ENCODE measurements at regions of chr1 and their contacts with region 1.

Region 1: GRCh38 chr1:171741872-171742576 is at the start of gene VAMP4:
- DNase-seq: peak; percentile 92
- ATAC-seq: peak; percentile 90
- H3K4me3 ChIP-seq: peak within 1 kb of the TSS; percentile 69 to 95 (median 93)
- H3K4me3 Mint-ChIP-seq: peak within 1 kb of the TSS; percentile 100
- H3K27ac ChIP-seq: peak within 1 kb of the TSS; percentile 91
- H3K27ac Mint-ChIP-seq: peak within 1 kb of the TSS; percentile 100
- H3K4me1 ChIP-seq: peaks cover 20 to 23% of the 10 kb centered on the region in 2 donors
- H3K4me1 Mint-ChIP-seq: peaks cover 40% of the 10 kb centered on the region
- H3K27me3 ChIP-seq: no peaks in the 10 kb centered on the region
- H3K27me3 Mint-ChIP-seq: no peaks in the 10 kb centered on the region
- CTCF ChIP-seq: no peak
- total RNA-seq, gene VAMP4: 17.5 and 21.8 TPM in 2 replicates

Region 2: GRCh38 chr1:171769171-171769570 is 27.1 kb after region 1 on chr1:
- CTCF ChIA-PET with region 1: no interaction called
- POLR2A ChIA-PET with region 1: no interaction called
- intact Hi-C with region 1: no loop called
- DNase-seq: no peak
- ATAC-seq: no peak
- H3K4me3 ChIP-seq: no peak overlapping the region
- H3K4me3 Mint-ChIP-seq: no peak overlapping the region
- H3K27ac ChIP-seq: no peak overlapping the region
- H3K27ac Mint-ChIP-seq: no peak overlapping the region
- H3K4me1 ChIP-seq: peaks cover 0 to 4% of the 10 kb centered on the region in 2 donors
- H3K4me1 Mint-ChIP-seq: peaks cover 8% of the 10 kb centered on the region
- H3K27me3 ChIP-seq: peaks cover 0 to 2% (median 0%) of the 10 kb centered on the region in 4 experiments
- H3K27me3 Mint-ChIP-seq: peaks cover 7% of the 10 kb centered on the region
- CTCF ChIP-seq: no peak

Region 3: DNA sequence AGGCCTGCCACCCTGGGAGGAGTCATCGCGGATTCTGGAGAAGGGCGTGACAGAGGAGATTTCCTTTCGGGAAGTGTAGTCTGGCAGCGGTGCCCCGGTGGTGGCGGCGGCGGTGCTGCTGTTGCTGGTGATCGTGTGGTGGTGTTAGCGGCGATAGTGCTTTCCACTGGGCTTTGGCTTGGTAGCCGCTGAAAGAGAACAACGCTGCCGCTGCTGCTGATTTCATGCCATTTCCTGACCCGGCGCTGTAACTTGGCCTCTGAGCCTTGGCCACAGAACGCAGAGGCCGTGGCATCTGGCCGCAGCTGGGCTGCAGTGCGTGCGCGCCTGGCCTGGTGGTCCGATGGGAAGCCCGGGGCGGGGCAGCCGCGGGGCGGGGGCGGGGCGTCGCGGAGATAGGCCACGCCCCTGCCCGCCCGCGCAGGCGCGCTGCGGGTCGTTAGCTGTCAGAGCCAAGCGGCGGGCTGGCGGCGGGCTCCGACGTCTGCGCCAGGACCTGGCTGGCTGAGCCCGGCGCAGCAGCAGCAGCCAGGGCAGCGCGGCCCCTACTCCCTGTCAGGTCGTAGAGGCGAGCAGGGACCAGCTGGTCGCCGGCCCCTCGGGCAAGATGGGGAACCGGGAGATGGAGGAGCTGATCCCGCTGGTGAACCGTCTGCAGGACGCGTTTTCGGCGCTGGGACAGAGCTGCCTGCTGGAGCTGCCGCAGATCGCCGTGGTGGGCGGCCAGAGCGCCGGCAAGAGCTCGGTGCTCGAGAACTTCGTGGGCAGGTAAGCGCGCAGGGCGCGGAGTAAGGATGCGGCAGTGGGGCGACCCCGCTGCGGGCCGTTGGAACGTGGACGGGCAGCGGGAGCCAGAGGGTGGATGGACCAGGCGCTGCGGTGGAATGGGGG is 99.3 kb after region 1 on chr1 and contains the start of gene DNM3:
- CTCF ChIA-PET with region 1: interaction called, 3 read pairs
- POLR2A ChIA-PET with region 1: no interaction called
- intact Hi-C with region 1: loop called (anchors 1 kb)
- DNase-seq: peak; percentile 88
- ATAC-seq: peak; percentile 93
- H3K4me3 ChIP-seq: peak within 1 kb of the TSS; percentile 50 to 86 (median 73)
- H3K4me3 Mint-ChIP-seq: peak within 1 kb of the TSS; percentile 86
- H3K27ac ChIP-seq: no peak within 1 kb of the TSS
- H3K27ac Mint-ChIP-seq: peak within 1 kb of the TSS; percentile 72
- H3K4me1 ChIP-seq: peaks cover 11 to 21% of the 10 kb centered on the region in 2 donors
- H3K4me1 Mint-ChIP-seq: peaks cover 17% of the 10 kb centered on the region
- H3K27me3 ChIP-seq: peaks cover 0 to 25% (median 17%) of the 10 kb centered on the region in 4 experiments
- H3K27me3 Mint-ChIP-seq: peaks cover 23% of the 10 kb centered on the region
- CTCF ChIP-seq: no peak
- total RNA-seq, gene DNM3: 1.3 and 1.5 TPM in 2 replicates

Region 4: GRCh38 chr1:172487550-172487949 is 745.5 kb after region 1 on chr1:
- CTCF ChIA-PET with region 1: no interaction called
- POLR2A ChIA-PET with region 1: no interaction called
- intact Hi-C with region 1: no loop called
- DNase-seq: no peak
- ATAC-seq: no peak
- H3K4me3 ChIP-seq: no peak overlapping the region
- H3K4me3 Mint-ChIP-seq: no peak overlapping the region
- H3K27ac ChIP-seq: no peak overlapping the region
- H3K27ac Mint-ChIP-seq: no peak overlapping the region
- H3K4me1 ChIP-seq: no peaks in the 10 kb centered on the region
- H3K4me1 Mint-ChIP-seq: no peaks in the 10 kb centered on the region
- H3K27me3 ChIP-seq: peaks cover 0 to 4% (median 1%) of the 10 kb centered on the region in 4 experiments
- H3K27me3 Mint-ChIP-seq: peaks cover 48% of the 10 kb centered on the region
- CTCF ChIP-seq: no peak